ENCODE measurements at regions of chr10 and their contacts with region 1.

Region 1: GRCh38 chr10:70267161-70267933 is 16.5 kb downstream of the NPFFR1 start:
- DNase-seq: peak in 1 of 2 experiments; percentile 89
- H3K4me3 ChIP-seq: no peak overlapping the region
- H3K27ac ChIP-seq: no peak overlapping the region
- H3K4me1 ChIP-seq: no peaks in the 10 kb centered on the region
- H3K27me3 ChIP-seq: no peaks in the 10 kb centered on the region
- CTCF ChIP-seq: peak; percentile 67 to 84 (median 79)
- EP300 ChIP-seq: no peak
- POLR2A ChIP-seq: no peak
- RAD21 ChIP-seq: peak; percentile 39 to 63; a peak in 3 of 4 replicates

Region 2: GRCh38 chr10:70221030-70221429 is 46.3 kb before region 1 on chr10:
- CTCF ChIA-PET with region 1: interaction called, 26 read pairs
- POLR2A ChIA-PET with region 1: no interaction called
- DNase-seq: no peak
- H3K4me3 ChIP-seq: no peak overlapping the region
- H3K27ac ChIP-seq: no peak overlapping the region
- H3K4me1 ChIP-seq: no peaks in the 10 kb centered on the region
- H3K27me3 ChIP-seq: no peaks in the 10 kb centered on the region
- CTCF ChIP-seq: no peak
- EP300 ChIP-seq: no peak
- POLR2A ChIP-seq: no peak
- RAD21 ChIP-seq: no peak

Region 3: DNA sequence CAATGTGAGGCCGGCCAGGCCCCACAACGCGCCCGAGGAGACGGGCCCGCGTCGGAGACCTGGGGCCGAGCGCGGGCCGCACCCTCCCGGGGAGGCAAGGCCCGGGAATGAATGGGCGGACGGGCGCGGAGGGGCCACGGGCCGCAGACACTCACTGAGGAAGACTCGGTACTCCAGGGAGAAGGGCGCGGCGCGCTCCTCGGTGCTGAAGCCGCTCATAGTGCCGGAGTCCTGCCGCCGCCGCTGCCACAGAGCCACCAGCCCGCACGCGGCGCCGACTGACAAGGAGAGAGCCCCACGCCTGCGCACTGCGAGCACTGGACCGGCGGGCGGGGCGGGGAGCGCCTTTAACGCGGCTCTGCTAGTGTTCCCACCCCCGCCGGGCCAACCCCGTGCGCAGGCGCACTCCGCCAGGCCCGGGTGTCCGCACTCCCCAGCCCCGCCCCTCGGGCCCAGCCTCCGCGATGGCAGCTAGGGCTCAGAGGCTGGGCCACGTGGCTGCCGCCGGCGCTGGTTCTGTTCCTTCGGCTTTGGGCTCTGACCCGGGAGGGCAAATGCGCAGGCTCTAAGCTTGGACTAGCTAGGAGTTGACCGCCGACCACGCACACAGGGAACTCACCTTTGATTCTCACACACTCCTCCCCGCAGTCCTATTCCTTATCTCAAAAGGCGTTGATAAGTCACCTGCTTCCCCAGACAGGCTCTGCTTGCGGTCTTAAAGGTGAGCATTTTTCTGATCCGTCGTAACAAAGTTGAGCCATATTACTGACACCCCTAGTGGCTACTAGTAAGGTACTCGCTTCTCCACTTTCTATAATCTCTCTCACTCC is 34.0 kb before region 1 on chr10 and contains the start of gene PPA1:
- CTCF ChIA-PET with region 1: interaction called, 13 read pairs
- POLR2A ChIA-PET with region 1: interaction called, 5 read pairs
- DNase-seq: peak; percentile 93 to 100
- H3K4me3 ChIP-seq: peak within 1 kb of the TSS; percentile 67 to 75 (median 68)
- H3K27ac ChIP-seq: peak within 1 kb of the TSS; percentile 38; the same call in 1 of the 2 replicates
- H3K4me1 ChIP-seq: peaks cover 0 to 7% (median 2%) of the 10 kb centered on the region in 4 experiments; a peak in 4 of 7 replicates
- H3K27me3 ChIP-seq: peaks cover 0 to 4% (median 0%) of the 10 kb centered on the region in 4 experiments; a peak in 2 of 7 replicates
- CTCF ChIP-seq: peak in 1 of 3 experiments; percentile 29; a peak in 1 of 4 replicates
- EP300 ChIP-seq: no peak
- POLR2A ChIP-seq: peak; percentile 58 to 80
- RAD21 ChIP-seq: no peak
- total RNA-seq, gene PPA1: 181 and 191 TPM in 2 replicates

Region 4: GRCh38 chr10:70283445-70284399 is 16.4 kb after region 1 on chr10 and contains the start of gene NPFFR1:
- CTCF ChIA-PET with region 1: interaction called, 31 read pairs
- POLR2A ChIA-PET with region 1: no interaction called
- DNase-seq: peak in 1 of 2 experiments; percentile 78
- H3K4me3 ChIP-seq: peak within 1 kb of the TSS; percentile 29 to 65 (median 46)
- H3K27ac ChIP-seq: no peak within 1 kb of the TSS
- H3K4me1 ChIP-seq: no peaks in the 10 kb centered on the region
- H3K27me3 ChIP-seq: peaks cover 14 to 36% (median 23%) of the 10 kb centered on the region in 4 experiments
- CTCF ChIP-seq: peak in 2 of 3 experiments; percentile 10 to 16; a peak in 2 of 4 replicates
- EP300 ChIP-seq: no peak
- POLR2A ChIP-seq: no peak
- RAD21 ChIP-seq: peak; percentile 12 to 21; a peak in 2 of 4 replicates
- total RNA-seq, gene NPFFR1: 0.06 TPM in 1 of 2 replicates, not detected in the other

Region 5: DNA sequence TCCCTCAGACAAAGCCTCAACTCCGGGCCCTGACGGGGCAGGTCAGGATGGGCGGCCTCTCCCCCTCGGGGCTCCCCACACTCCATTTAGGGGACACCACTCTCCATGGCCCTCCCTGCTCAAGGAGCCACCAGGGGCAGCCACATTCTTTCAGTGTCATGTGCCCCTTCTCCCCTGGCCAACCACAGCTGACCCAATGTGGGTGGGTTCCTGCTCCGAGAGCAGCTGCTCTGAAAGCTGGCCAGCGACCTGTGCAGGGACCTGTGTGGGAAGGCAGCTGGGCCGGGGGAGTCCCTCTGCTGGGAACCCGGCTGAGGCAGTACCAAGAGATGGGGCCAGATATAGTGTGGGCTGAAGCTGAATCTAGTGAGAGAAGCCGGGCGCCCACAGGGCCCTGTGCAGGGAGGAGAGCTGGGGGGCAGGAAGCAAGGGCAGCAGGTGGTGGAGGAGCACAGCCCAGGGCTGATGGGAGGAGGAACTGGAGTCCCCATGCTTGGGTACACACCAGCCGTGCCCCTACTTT is 57.1 kb after region 1 on chr10:
- CTCF ChIA-PET with region 1: interaction called, 11 read pairs
- POLR2A ChIA-PET with region 1: no interaction called
- DNase-seq: no peak
- H3K4me3 ChIP-seq: no peak overlapping the region
- H3K27ac ChIP-seq: no peak overlapping the region
- H3K4me1 ChIP-seq: peaks cover 0 to 17% (median 9%) of the 10 kb centered on the region in 4 experiments; a peak in 6 of 7 replicates
- H3K27me3 ChIP-seq: no peaks in the 10 kb centered on the region
- CTCF ChIP-seq: no peak
- EP300 ChIP-seq: no peak
- POLR2A ChIP-seq: no peak
- RAD21 ChIP-seq: no peak

Measured in H1 (cell line).